ENCODE measurements at regions of chr1 and their contacts with region 1.

Region 1: GRCh38 chr1:12619792-12620487 is 1.9 kb upstream of the DHRS3 start:
- DNase-seq: peak; percentile 65 to 78 (median 71)
- H3K4me3 ChIP-seq: peak overlapping the region; percentile 92
- H3K4me3 Mint-ChIP-seq: peak overlapping the region; percentile 98 to 99 (median 98)
- H3K27ac ChIP-seq: peak overlapping the region; percentile 85
- H3K27ac Mint-ChIP-seq: peak overlapping the region; percentile 51 to 96 (median 84)
- H3K4me1 ChIP-seq: peaks cover 28% of the 10 kb centered on the region
- H3K4me1 Mint-ChIP-seq: peaks cover 39 to 46% (median 42%) of the 10 kb centered on the region in 3 donors
- H3K27me3 ChIP-seq: no peaks in the 10 kb centered on the region
- H3K27me3 Mint-ChIP-seq: peaks cover 0 to 10% of the 10 kb centered on the region in 2 donors

Region 2: DNA sequence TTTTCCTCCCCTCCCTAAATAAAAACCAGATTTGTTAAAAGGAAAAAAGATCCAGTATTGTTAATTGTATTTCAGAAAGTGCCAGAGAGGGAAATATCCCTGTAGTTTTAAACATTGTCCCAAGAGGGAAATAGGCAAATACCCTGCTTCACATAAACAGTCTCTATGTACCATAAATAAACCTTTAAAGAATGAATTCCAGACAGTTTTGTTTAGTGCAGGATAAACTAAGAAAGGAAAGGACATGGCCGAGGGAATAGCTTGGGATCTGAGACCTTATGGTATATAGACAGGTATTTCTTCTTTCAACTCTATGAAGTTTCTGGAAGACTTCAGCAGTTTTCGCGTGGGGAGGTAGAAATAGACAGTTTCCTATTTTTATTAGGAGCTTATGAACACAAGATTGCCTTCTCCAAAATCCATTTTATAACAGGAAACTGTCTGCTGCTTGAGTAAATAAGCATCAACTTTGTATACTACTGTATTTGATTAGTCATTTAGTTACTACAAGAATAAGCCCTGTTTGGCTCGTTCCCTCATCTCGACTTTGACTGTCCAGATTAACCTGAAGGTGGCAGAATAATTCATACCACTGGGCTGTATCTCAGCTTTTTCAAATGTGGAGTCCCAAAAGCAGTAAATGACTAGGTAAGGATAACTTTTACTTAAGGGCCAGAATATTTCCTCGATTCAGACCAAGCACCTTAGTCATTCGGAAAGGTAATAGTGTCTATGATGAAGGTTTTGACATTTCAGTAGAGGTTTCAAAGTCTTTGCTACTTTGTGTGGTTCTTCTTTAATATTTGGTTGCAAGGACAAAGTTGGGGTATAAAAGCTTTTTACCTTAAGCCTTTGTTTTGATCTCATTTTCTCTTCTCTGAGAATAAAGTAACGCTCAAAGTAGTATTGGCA is 212.6 kb before region 1 on chr1:
- CTCF ChIA-PET with region 1: interaction called, 27 read pairs
- POLR2A ChIA-PET with region 1: no interaction called
- DNase-seq: peak in 2 of 5 donors; percentile 6 to 34
- H3K4me3 ChIP-seq: no peak overlapping the region
- H3K4me3 Mint-ChIP-seq: no peak overlapping the region
- H3K27ac ChIP-seq: no peak overlapping the region
- H3K27ac Mint-ChIP-seq: peak overlapping the region in 3 of 8 donors; percentile 17 to 60 (median 49)
- H3K4me1 ChIP-seq: peaks cover 24% of the 10 kb centered on the region
- H3K4me1 Mint-ChIP-seq: peaks cover 6 to 15% (median 7%) of the 10 kb centered on the region in 3 donors
- H3K27me3 ChIP-seq: no peaks in the 10 kb centered on the region
- H3K27me3 Mint-ChIP-seq: no peaks in the 10 kb centered on the region

Region 3: DNA sequence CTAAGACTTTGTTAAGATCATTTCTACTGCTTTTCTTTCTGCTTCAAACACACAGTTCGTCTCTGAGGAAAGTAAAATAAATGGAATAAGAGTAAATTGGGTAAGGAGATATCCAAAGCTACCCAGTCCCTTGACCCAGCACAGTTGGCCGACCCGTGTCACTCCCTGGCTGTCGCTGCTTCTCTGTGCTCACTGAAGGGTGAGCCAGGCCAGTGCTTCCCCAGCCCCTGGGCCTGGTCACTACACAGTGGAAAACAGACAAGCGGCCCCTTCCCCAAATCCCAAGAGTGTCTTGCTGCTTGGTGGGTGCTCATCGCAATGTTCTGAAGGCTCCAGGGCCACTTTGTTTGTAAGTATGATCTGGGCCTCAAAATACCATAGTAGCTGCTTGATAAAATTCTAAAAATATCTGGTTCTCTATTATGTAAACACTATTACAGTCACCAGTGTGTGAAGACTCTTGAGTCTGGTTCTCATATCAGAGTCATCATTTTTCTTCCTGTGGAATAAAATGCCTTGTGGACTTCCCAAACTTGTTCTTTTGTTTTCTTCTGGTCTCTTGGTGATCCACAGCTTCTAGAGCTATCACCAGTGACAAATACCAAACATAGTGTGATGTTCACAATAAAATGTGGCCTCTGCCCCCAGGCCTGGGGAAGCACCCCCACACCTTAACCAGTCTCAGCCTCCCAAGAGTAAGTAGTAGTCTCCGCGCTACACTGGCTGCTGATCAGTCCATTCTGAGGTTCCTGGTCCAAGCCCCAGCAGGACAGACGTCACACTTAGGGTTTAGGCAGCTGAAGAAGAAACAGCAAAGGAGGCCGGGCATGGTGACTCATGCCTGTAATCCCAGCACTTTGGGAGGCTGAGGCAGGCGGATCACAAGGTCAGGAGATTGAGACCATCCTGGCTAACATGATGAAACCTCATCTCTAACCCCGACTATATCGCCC is 108.1 kb before region 1 on chr1:
- CTCF ChIA-PET with region 1: interaction called, 22 read pairs
- POLR2A ChIA-PET with region 1: interaction called, 5 read pairs
- DNase-seq: no peak
- H3K4me3 ChIP-seq: peak overlapping the region; percentile 45
- H3K4me3 Mint-ChIP-seq: peak overlapping the region; percentile 37 to 83 (median 73)
- H3K27ac ChIP-seq: peak overlapping the region; percentile 53
- H3K27ac Mint-ChIP-seq: peak overlapping the region; percentile 42 to 97 (median 84)
- H3K4me1 ChIP-seq: peaks cover 35% of the 10 kb centered on the region
- H3K4me1 Mint-ChIP-seq: peaks cover 29 to 52% (median 43%) of the 10 kb centered on the region in 3 donors
- H3K27me3 ChIP-seq: no peaks in the 10 kb centered on the region
- H3K27me3 Mint-ChIP-seq: no peaks in the 10 kb centered on the region

Region 4: DNA sequence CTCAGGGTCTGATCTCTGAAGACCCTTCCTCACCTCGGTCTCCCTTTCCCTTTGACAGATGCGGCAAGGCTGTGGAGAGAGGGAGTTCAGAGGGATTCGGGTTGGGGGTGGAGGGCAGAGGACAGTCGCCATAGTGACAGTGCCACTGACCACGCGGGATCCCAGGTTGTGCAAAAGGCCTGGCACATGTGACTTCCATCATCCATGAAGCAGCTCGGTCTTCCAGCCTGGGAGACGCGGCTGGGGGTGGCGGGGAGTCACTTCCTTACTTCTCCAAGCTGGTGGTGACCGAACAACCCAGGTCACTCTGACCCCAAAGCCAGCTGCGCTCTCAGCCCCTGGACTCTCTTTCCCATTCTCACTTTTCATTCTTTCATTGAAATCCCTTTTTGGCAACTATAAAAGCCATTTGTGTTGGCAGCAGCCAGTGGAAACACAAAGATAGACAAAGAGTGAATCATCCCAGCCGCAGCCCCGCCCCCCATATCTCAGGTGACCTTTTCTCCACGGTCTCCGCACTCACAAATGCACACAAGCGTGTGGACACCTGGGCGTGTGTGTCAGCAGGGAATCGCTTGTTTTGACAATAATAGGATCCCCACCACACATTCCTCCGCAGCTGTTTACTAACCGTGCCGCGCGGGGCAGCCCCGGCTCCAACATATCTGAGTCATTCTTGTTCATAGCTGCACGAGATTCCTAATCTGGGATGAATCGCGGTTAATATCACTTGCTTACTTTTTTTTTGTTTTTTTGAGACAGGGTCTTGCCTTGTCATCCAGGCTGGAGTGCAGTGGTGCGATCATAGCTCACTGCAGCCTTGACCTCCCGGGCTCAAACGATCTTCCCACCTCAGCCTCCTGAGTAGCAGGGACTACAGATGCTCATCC is 70.2 kb before region 1 on chr1:
- CTCF ChIA-PET with region 1: no interaction called
- POLR2A ChIA-PET with region 1: no interaction called
- DNase-seq: no peak
- H3K4me3 ChIP-seq: no peak overlapping the region
- H3K4me3 Mint-ChIP-seq: no peak overlapping the region
- H3K27ac ChIP-seq: peak overlapping the region; percentile 43
- H3K27ac Mint-ChIP-seq: no peak overlapping the region
- H3K4me1 ChIP-seq: no peaks in the 10 kb centered on the region
- H3K4me1 Mint-ChIP-seq: no peaks in the 10 kb centered on the region
- H3K27me3 ChIP-seq: no peaks in the 10 kb centered on the region
- H3K27me3 Mint-ChIP-seq: peaks cover 2 to 3% of the 10 kb centered on the region in 2 donors

Region 5: DNA sequence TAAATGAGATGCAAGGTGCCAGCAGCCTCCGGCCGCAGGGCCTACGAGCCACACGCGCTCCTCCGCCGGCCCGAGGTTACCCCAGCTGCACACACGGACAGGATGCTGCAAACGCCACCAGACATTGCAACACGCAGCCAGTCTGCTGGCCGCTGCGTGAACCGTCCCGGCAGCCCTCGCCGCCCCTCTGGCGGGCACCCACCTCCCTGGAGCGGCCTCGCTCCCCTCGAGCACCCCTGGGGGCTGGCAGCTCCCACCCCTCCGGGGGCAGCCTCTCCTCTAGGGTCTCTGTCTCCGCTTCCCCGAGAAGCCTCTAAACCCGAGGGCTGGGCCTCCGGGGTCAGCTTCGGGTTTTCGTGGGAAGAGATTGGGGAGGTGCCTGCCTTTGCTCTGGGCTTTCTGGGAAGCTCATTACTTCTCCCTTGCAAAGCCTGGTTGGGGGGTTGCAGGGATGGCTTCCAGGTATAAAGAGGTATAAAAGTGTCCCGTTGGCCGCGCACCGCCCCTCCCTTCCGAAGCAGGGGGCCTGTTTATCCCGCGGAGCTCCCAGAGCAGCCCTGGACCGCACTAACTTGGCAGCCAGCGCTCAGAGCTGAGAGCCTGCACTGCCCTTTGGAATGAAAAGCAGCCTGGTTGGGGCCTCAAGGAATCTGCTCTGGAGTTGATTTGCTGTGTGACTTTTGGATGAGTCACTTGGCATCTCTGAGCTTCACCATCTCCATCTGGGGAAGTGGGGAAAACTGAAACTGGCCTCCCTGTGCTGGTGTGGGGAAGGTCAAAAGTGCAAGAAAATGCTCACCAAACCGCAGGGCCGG is 23.7 kb before region 1 on chr1:
- CTCF ChIA-PET with region 1: interaction called, 124 read pairs
- POLR2A ChIA-PET with region 1: interaction called, 9 read pairs
- DNase-seq: no peak
- H3K4me3 ChIP-seq: no peak overlapping the region
- H3K4me3 Mint-ChIP-seq: peak overlapping the region in 4 of 7 donors; percentile 15 to 75 (median 40)
- H3K27ac ChIP-seq: no peak overlapping the region
- H3K27ac Mint-ChIP-seq: peak overlapping the region in 3 of 8 donors; percentile 12 to 43 (median 21)
- H3K4me1 ChIP-seq: peaks cover 45% of the 10 kb centered on the region
- H3K4me1 Mint-ChIP-seq: peaks cover 37 to 70% (median 49%) of the 10 kb centered on the region in 3 donors
- H3K27me3 ChIP-seq: no peaks in the 10 kb centered on the region
- H3K27me3 Mint-ChIP-seq: peaks cover 0 to 4% of the 10 kb centered on the region in 2 donors

Region 6: GRCh38 chr1:12604114-12604874 is 15.6 kb before region 1 on chr1:
- CTCF ChIA-PET with region 1: interaction called, 124 read pairs
- POLR2A ChIA-PET with region 1: interaction called, 24 read pairs
- DNase-seq: peak; percentile 43 to 76 (median 50)
- H3K4me3 ChIP-seq: no peak overlapping the region
- H3K4me3 Mint-ChIP-seq: peak overlapping the region; percentile 31 to 80 (median 64)
- H3K27ac ChIP-seq: peak overlapping the region; percentile 3
- H3K27ac Mint-ChIP-seq: peak overlapping the region; percentile 11 to 96 (median 74)
- H3K4me1 ChIP-seq: peaks cover 60% of the 10 kb centered on the region
- H3K4me1 Mint-ChIP-seq: peaks cover 46 to 82% (median 59%) of the 10 kb centered on the region in 3 donors
- H3K27me3 ChIP-seq: no peaks in the 10 kb centered on the region
- H3K27me3 Mint-ChIP-seq: peaks cover 0 to 2% of the 10 kb centered on the region in 2 donors

Region 7: GRCh38 chr1:12640237-12640957 is 20.5 kb after region 1 on chr1:
- CTCF ChIA-PET with region 1: no interaction called
- POLR2A ChIA-PET with region 1: no interaction called
- DNase-seq: no peak
- H3K4me3 ChIP-seq: no peak overlapping the region
- H3K4me3 Mint-ChIP-seq: no peak overlapping the region
- H3K27ac ChIP-seq: no peak overlapping the region
- H3K27ac Mint-ChIP-seq: peak overlapping the region in 1 of 8 donors; percentile 6
- H3K4me1 ChIP-seq: no peaks in the 10 kb centered on the region
- H3K4me1 Mint-ChIP-seq: no peaks in the 10 kb centered on the region
- H3K27me3 ChIP-seq: no peaks in the 10 kb centered on the region
- H3K27me3 Mint-ChIP-seq: peaks cover 6 to 20% of the 10 kb centered on the region in 2 donors

Region 8: GRCh38 chr1:12658531-12659453 is 38.9 kb after region 1 on chr1:
- CTCF ChIA-PET with region 1: interaction called, 22 read pairs
- POLR2A ChIA-PET with region 1: no interaction called
- DNase-seq: peak; percentile 55 to 81 (median 61)
- H3K4me3 ChIP-seq: no peak overlapping the region
- H3K4me3 Mint-ChIP-seq: peak overlapping the region in 1 of 7 donors; percentile 26
- H3K27ac ChIP-seq: no peak overlapping the region
- H3K27ac Mint-ChIP-seq: peak overlapping the region in 1 of 8 donors; percentile 68
- H3K4me1 ChIP-seq: peaks cover 5% of the 10 kb centered on the region
- H3K4me1 Mint-ChIP-seq: peaks cover 7% of the 10 kb centered on the region in 3 donors
- H3K27me3 ChIP-seq: no peaks in the 10 kb centered on the region
- H3K27me3 Mint-ChIP-seq: peaks cover 5 to 9% of the 10 kb centered on the region in 2 donors

Region 9: DNA sequence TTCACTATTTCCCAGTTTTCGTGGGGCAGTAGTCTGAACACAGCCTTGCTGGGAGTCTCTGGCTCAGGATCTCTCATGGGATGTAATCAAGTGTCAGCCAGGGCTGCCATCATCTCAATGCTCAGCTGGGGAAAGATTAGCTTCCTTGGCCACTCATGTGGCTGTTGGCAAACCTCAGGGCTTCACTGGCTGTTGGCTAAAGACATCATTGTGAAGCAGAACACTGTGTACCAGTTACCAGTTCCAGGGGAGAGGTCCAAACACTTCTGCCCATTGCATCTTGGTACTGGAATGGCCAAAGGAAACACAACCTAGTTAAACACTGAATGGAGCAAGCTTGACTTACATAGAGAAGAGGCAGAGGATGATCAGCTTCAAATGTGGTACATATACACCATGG is 57.6 kb after region 1 on chr1:
- CTCF ChIA-PET with region 1: no interaction called
- POLR2A ChIA-PET with region 1: no interaction called
- DNase-seq: no peak
- H3K4me3 ChIP-seq: no peak overlapping the region
- H3K4me3 Mint-ChIP-seq: no peak overlapping the region
- H3K27ac ChIP-seq: no peak overlapping the region
- H3K27ac Mint-ChIP-seq: no peak overlapping the region
- H3K4me1 ChIP-seq: no peaks in the 10 kb centered on the region
- H3K4me1 Mint-ChIP-seq: no peaks in the 10 kb centered on the region
- H3K27me3 ChIP-seq: no peaks in the 10 kb centered on the region
- H3K27me3 Mint-ChIP-seq: peaks cover 42 to 54% of the 10 kb centered on the region in 2 donors